Activated T-helper 2 cell treated with anti-CD3 and anti-CD28 coated beads, Interferon-gamma antibody, Interleukin-2, Interleukin-4, amounts not matched to agents 10 μg/mL and 5 μg/mL and 100 μg/mL, durations not matched to agents 14 hours and 24 hours and 36 hours (primary cell): ENCODE measurements at regions of chr12 and their contacts with region 1.

Region 1: GRCh38 chr12:69359531-69360347 is at the start of gene YEATS4:
- DNase-seq: peak; percentile 88
- H3K4me3 Mint-ChIP-seq: peak within 1 kb of the TSS; percentile 84
- H3K27ac Mint-ChIP-seq: peak within 1 kb of the TSS; percentile 97
- H3K4me1 Mint-ChIP-seq: peaks cover 30% of the 10 kb centered on the region
- H3K27me3 Mint-ChIP-seq: peaks cover 3% of the 10 kb centered on the region
- total RNA-seq, gene YEATS4: 38.9 and 39.0 TPM in 2 replicates

Region 2: DNA sequence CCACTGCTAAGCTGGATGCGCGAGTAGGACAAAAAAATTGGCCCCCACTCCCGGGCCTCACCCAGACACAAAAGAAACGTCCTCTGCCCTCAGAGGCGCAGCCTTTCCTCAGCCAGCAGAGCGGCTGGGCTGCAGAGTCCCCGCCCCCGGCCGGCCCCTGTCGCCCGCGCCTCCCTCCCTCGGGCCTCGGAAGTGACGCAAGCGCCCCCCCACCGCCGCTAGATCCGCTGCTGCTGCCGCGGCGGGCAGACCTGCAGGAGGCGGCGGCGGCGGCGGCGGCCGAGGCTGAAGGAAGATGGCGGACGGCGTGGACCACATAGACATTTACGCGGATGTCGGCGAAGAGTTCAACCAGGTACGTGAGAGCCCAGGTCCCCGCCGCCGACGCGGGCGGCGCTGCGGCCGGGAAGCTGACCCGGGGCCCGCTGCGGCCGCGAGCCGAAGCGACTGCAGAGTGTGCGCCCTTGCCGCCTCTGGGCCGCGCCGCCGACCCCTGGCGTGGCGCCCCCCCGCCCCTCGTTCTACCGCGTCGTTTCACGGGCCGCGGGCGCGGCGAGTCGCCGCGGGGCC is 120.3 kb before region 1 on chr12 and contains the start of gene CPSF6:
- intact Hi-C with region 1: loop called (anchors 5 kb)
- DNase-seq: peak; percentile 93
- H3K4me3 Mint-ChIP-seq: peak within 1 kb of the TSS; percentile 96
- H3K27ac Mint-ChIP-seq: peak within 1 kb of the TSS; percentile 96
- H3K4me1 Mint-ChIP-seq: peaks cover 36% of the 10 kb centered on the region
- H3K27me3 Mint-ChIP-seq: no peaks in the 10 kb centered on the region
- total RNA-seq, gene CPSF6: 107 and 119 TPM in 2 replicates

Region 3: GRCh38 chr12:69570545-69571399 is 211.0 kb after region 1 on chr12:
- intact Hi-C with region 1: loop called (anchors 1 kb)
- DNase-seq: peak; percentile 23
- H3K4me3 Mint-ChIP-seq: no peak overlapping the region
- H3K27ac Mint-ChIP-seq: no peak overlapping the region
- H3K4me1 Mint-ChIP-seq: peaks cover 12% of the 10 kb centered on the region
- H3K27me3 Mint-ChIP-seq: no peaks in the 10 kb centered on the region

Region 4: DNA sequence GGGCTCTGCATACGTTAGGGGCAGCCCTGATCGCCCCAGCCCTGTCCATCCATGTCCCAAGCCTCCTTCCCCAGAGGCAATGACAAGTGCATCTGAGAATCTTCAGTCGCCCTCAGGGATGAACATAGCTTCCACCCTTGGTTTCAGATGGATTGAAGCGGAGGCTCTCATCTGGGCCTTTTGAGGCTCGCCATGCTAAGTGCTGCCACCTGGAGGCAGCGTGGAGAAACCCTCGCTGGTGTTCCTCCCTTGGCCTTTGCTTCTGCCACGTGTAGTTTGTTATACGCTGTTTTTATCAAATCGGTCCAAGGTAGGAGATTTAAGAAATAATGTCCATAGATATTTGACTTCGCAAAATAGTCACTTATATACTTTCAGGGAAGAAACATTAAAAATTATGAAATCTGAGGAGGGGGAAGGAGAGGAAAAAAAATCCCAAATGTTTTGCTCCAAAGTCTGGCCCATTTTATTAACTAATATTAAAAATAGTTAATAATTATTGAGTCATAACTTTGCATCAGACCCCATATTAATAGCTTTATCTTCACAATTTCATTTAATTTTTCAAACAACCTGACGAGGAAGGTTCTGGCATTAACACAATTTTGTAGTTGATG is 279.8 kb after region 1 on chr12:
- intact Hi-C with region 1: loop called (anchors 1 kb)
- DNase-seq: peak; percentile 34
- H3K4me3 Mint-ChIP-seq: no peak overlapping the region
- H3K27ac Mint-ChIP-seq: no peak overlapping the region
- H3K4me1 Mint-ChIP-seq: peaks cover 2% of the 10 kb centered on the region
- H3K27me3 Mint-ChIP-seq: peaks cover 4% of the 10 kb centered on the region